A549 (cell line): ENCODE measurements at regions of chr16 and their contacts with region 1.

Region 1: GRCh38 chr16:87778830-87779579 is 13.2 kb upstream of the KLHDC4 start:
- DNase-seq: peak; percentile 85 to 99
- ATAC-seq: peak; percentile 87 to 94
- H3K4me3 ChIP-seq: peak overlapping the region; percentile 10; the same call in 1 of the 3 replicates
- H3K27ac ChIP-seq: peak overlapping the region; percentile 96
- H3K4me1 ChIP-seq: peaks cover 43% of the 10 kb centered on the region
- CTCF ChIP-seq: peak; percentile 97
- EP300 ChIP-seq: peak; percentile 97 to 98
- POLR2A ChIP-seq: no peak
- RAD21 ChIP-seq: peak; percentile 100

Region 2: GRCh38 chr16:87621976-87622713 is 156.9 kb before region 1 on chr16:
- CTCF ChIA-PET with region 1: no interaction called
- POLR2A ChIA-PET with region 1: no interaction called
- DNase-seq: no peak
- ATAC-seq: peak in 1 of 2 experiments; percentile 23; a peak in 3 of 6 replicates
- H3K4me3 ChIP-seq: no peak overlapping the region
- H3K27ac ChIP-seq: no peak overlapping the region
- H3K4me1 ChIP-seq: no peaks in the 10 kb centered on the region
- CTCF ChIP-seq: no peak
- EP300 ChIP-seq: no peak
- POLR2A ChIP-seq: no peak
- RAD21 ChIP-seq: no peak

Region 3: DNA sequence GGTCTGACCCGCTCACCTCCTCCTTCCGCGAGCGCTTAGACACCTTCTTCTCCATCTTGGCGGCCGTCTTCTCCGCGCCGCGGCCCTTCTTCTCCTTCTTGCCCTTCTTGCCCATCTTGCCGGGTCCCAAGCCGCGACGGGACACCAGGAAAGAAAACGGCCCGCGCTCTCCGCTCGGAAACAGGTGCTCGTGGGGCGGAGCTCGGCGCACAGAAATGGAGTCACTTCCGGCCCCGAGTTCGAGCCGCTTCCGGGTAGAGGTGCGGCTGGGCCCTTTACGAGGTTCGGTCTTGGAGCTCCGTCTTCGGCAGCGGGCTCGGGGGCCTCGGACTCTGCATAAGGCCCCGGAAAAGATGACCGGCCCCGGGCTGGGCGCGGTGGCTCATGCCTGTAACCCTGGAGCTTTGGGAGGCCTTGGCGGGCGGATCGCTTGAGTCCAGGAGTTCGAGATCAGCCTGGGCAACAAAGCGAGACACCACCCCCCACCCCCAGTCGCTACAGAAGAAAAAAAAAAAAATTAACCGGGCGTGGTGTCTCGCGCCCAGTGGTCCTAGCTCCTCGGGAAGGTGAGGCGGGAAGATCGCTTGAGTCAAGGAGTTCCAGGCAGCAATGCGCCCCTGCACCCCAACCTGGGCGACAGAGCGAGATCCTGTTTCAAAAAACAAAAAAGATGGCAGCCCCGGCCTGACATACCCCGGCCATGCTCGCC is 13.1 kb before region 1 on chr16 and contains the start of gene KLHDC4:
- CTCF ChIA-PET with region 1: interaction called, 37 read pairs
- POLR2A ChIA-PET with region 1: interaction called, 3 read pairs
- DNase-seq: peak; percentile 90 to 91
- ATAC-seq: peak; percentile 92 to 95
- H3K4me3 ChIP-seq: peak within 1 kb of the TSS; percentile 92
- H3K27ac ChIP-seq: peak within 1 kb of the TSS; percentile 89 to 91
- H3K4me1 ChIP-seq: peaks cover 18% of the 10 kb centered on the region
- CTCF ChIP-seq: no peak
- EP300 ChIP-seq: no peak
- POLR2A ChIP-seq: peak; percentile 74
- RAD21 ChIP-seq: no peak
- polyA plus RNA-seq, gene KLHDC4: 22.6 and 25.9 TPM in 2 replicates

Region 4: GRCh38 chr16:87806603-87807546 is 27.9 kb after region 1 on chr16:
- CTCF ChIA-PET with region 1: interaction called, 140 read pairs
- POLR2A ChIA-PET with region 1: interaction called, 23 read pairs
- DNase-seq: peak; percentile 78 to 85
- ATAC-seq: peak; percentile 78 to 83
- H3K4me3 ChIP-seq: peak overlapping the region; percentile 31
- H3K27ac ChIP-seq: peak overlapping the region; percentile 92 to 97
- H3K4me1 ChIP-seq: peaks cover 45% of the 10 kb centered on the region
- CTCF ChIP-seq: no peak
- EP300 ChIP-seq: peak; percentile 41 to 74; a peak in 2 of 5 replicates
- POLR2A ChIP-seq: peak; percentile 8; the same call in 1 of the 2 replicates
- RAD21 ChIP-seq: peak in 1 of 2 experiments; percentile 33; a peak in 1 of 5 replicates

Region 5: GRCh38 chr16:87828071-87828971 is 49.3 kb after region 1 on chr16:
- CTCF ChIA-PET with region 1: interaction called, 417 read pairs
- POLR2A ChIA-PET with region 1: interaction called, 52 read pairs
- DNase-seq: peak in 1 of 2 experiments; percentile 81
- ATAC-seq: 0 out of 6 replicates have a peak, but pooled peaks of 1 of the 2 experiments have one; percentile 0
- H3K4me3 ChIP-seq: no peak overlapping the region
- H3K27ac ChIP-seq: peak overlapping the region; percentile 97 to 99
- H3K4me1 ChIP-seq: peaks cover 98% of the 10 kb centered on the region
- CTCF ChIP-seq: no peak
- EP300 ChIP-seq: no peak
- POLR2A ChIP-seq: no peak
- RAD21 ChIP-seq: no peak

Region 6: GRCh38 chr16:87853411-87854052 is 74.5 kb after region 1 on chr16:
- CTCF ChIA-PET with region 1: interaction called, 269 read pairs
- POLR2A ChIA-PET with region 1: interaction called, 5 read pairs
- DNase-seq: peak; percentile 82 to 94
- ATAC-seq: peak; percentile 15 to 18
- H3K4me3 ChIP-seq: peak overlapping the region; percentile 29
- H3K27ac ChIP-seq: peak overlapping the region; percentile 97 to 99
- H3K4me1 ChIP-seq: peaks cover 98% of the 10 kb centered on the region
- CTCF ChIP-seq: no peak
- EP300 ChIP-seq: peak; percentile 73 to 93; a peak in 3 of 5 replicates
- POLR2A ChIP-seq: 0 out of 2 replicates have a peak, but pooled peaks have one; percentile 19
- RAD21 ChIP-seq: 0 out of 5 replicates have a peak, but pooled peaks of 1 of the 2 experiments have one; percentile 12

Region 7: DNA sequence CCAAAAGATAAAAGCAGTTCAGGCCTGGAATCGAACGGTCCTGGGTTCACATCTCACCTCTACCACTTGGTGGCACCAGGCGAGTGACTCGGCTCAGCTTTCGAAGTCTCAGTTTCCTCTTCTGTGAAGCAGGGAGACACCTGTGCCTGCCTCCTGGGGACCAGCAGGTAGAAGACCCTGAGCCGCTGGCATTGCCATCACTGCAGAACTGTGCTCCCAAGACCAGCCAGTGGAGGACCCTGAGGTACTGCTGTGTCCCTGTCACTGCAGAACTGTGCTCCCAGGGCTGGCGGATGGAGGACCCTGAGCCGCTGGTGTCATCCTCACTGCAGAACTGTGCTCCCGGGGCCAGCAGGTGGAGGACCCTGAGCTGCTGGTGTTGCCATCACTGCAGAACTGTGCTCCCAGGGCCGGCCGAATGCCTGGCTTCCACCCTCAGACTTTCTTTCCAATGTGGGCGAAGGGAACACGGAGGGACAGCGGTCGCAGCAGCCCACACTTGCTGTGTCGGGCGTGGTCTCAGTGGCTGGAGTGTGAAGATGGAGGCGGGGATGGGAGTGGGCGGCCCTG is 99.0 kb after region 1 on chr16:
- CTCF ChIA-PET with region 1: interaction called, 269 read pairs
- POLR2A ChIA-PET with region 1: no interaction called
- DNase-seq: no peak
- ATAC-seq: peak in 1 of 2 experiments; percentile 50; a peak in 3 of 6 replicates
- H3K4me3 ChIP-seq: no peak overlapping the region
- H3K27ac ChIP-seq: no peak overlapping the region
- H3K4me1 ChIP-seq: no peaks in the 10 kb centered on the region
- CTCF ChIP-seq: peak; percentile 14; the same call in 1 of the 3 replicates
- EP300 ChIP-seq: no peak
- POLR2A ChIP-seq: no peak
- RAD21 ChIP-seq: 0 out of 5 replicates have a peak, but pooled peaks have one; percentile 15 to 26

Region 8: GRCh38 chr16:87914812-87915211 is 135.8 kb after region 1 on chr16:
- CTCF ChIA-PET with region 1: interaction called, 15 read pairs
- POLR2A ChIA-PET with region 1: no interaction called
- DNase-seq: no peak
- ATAC-seq: no peak
- H3K4me3 ChIP-seq: no peak overlapping the region
- H3K27ac ChIP-seq: no peak overlapping the region
- H3K4me1 ChIP-seq: no peaks in the 10 kb centered on the region
- CTCF ChIP-seq: no peak
- EP300 ChIP-seq: no peak
- POLR2A ChIP-seq: no peak
- RAD21 ChIP-seq: no peak